ENCODE measurements at regions of chr3 and their contacts with region 1.

Region 1: DNA sequence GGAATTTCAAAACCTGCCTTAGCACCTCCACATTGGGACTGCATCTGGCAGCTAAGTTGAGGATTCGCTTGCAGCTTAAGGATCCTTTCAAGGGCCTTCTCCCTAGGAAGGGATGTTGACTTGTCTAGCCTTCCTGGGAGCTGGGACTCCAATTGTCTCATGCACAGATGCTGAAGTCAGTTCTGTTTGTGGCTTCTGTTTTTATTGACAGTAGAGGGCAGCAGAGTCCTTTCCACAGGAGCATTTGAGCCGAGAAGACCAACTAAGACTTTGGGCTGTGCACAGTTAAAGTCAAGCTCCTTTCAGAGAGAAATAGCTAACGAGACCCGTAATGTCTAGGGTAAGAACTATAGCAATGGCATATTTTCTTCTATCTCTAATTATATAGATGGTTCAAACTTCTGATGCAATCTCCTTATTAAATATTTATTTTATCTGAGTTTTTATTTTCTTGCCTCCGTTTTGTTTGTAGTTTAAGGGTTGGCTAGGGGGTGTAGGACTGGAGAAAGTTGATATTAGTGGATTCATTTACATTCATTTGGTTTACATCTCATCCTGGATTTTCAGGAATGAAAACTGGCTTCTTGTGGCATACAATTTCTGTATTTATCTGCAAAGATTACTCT is 59.7 kb upstream of the KBTBD8 start:
- DNase-seq: peak; percentile 29
- H3K4me3 Mint-ChIP-seq: no peak overlapping the region
- H3K27ac Mint-ChIP-seq: no peak overlapping the region
- H3K4me1 Mint-ChIP-seq: no peaks in the 10 kb centered on the region
- H3K27me3 Mint-ChIP-seq: peaks cover 6% of the 10 kb centered on the region

Region 2: DNA sequence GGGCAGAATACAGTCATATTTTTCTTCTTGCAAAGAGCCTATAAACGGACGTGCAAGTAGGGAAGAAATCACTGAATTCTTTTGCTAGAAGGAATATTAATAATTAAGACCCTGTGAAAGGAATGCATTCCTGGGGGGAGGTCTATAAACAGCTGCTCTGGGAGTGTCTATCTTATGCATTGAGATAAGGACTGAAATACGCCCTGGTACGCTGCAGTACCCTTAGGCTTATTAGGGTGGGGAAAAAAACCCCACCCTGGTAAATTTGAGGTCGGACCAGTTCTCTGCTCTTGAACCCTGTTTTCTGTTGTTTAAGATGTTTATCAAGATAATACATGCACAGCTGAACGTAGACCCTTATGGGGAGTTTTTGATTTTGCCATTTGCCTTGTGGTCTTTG is 40.3 kb before region 1 on chr3:
- CTCF ChIA-PET with region 1: no interaction called
- POLR2A ChIA-PET with region 1: no interaction called
- intact Hi-C with region 1: no loop called
- DNase-seq: no peak
- H3K4me3 Mint-ChIP-seq: no peak overlapping the region
- H3K27ac Mint-ChIP-seq: no peak overlapping the region
- H3K4me1 Mint-ChIP-seq: no peaks in the 10 kb centered on the region
- H3K27me3 Mint-ChIP-seq: no peaks in the 10 kb centered on the region

Region 3: DNA sequence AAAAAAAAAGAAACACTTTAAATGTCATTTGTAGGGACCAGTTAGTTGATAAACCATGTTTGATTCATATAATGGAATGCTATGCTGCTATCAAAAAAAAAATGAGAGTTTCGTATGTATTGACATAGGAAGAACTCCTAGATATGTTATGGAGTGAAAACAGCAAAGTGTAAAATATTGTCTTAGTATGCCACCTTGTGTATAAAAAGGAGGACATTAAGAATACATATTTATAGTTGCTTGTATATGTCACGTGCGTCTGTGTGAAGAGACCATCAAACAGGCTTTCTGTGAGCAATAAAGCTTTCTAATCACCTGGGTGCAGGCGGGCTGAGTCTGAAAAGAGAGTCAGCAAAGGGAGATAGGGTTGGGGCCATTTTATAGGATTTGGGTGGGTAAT is 99.2 kb after region 1 on chr3:
- CTCF ChIA-PET with region 1: interaction called, 9 read pairs
- POLR2A ChIA-PET with region 1: no interaction called
- intact Hi-C with region 1: loop called (anchors 2 kb)
- DNase-seq: no peak
- H3K4me3 Mint-ChIP-seq: no peak overlapping the region
- H3K27ac Mint-ChIP-seq: no peak overlapping the region
- H3K4me1 Mint-ChIP-seq: no peaks in the 10 kb centered on the region
- H3K27me3 Mint-ChIP-seq: no peaks in the 10 kb centered on the region

Region 4: GRCh38 chr3:68893600-68894239 is 1955.3 kb after region 1 on chr3:
- CTCF ChIA-PET with region 1: interaction called, 15 read pairs
- POLR2A ChIA-PET with region 1: no interaction called
- intact Hi-C with region 1: no loop called
- DNase-seq: no peak
- H3K4me3 Mint-ChIP-seq: no peak overlapping the region
- H3K27ac Mint-ChIP-seq: no peak overlapping the region
- H3K4me1 Mint-ChIP-seq: no peaks in the 10 kb centered on the region
- H3K27me3 Mint-ChIP-seq: peaks cover 4% of the 10 kb centered on the region

Measured in activated CD4-positive, alpha-beta memory T cell treated with anti-CD3 and anti-CD28 coated beads for 36 hours (primary cell).